SK-N-SH (cell line): ENCODE measurements at regions of chr10 and their contacts with region 1.

Region 1: GRCh38 chr10:63720072-63720537 is 198.9 kb downstream of the REEP3 start:
- DNase-seq: peak; percentile 27
- H3K4me3 ChIP-seq: peak overlapping the region in 1 of 2 experiments; percentile 53; a peak in 1 of 4 replicates
- H3K27ac ChIP-seq: peak overlapping the region in 1 of 2 experiments; percentile 56; a peak in 2 of 4 replicates
- H3K4me1 ChIP-seq: peaks cover 44 to 56% of the 10 kb centered on the region in 2 experiments
- H3K27me3 ChIP-seq: no peaks in the 10 kb centered on the region
- CTCF ChIP-seq: peak; percentile 99
- EP300 ChIP-seq: no peak
- RAD21 ChIP-seq: peak; percentile 95

Region 2: GRCh38 chr10:63157845-63158624 is 562.1 kb before region 1 on chr10:
- CTCF ChIA-PET with region 1: interaction called, 199 read pairs
- POLR2A ChIA-PET with region 1: no interaction called
- DNase-seq: peak; percentile 54
- H3K4me3 ChIP-seq: no peak overlapping the region
- H3K27ac ChIP-seq: no peak overlapping the region
- H3K4me1 ChIP-seq: no peaks in the 10 kb centered on the region
- H3K27me3 ChIP-seq: no peaks in the 10 kb centered on the region
- CTCF ChIP-seq: peak; percentile 88
- EP300 ChIP-seq: no peak
- RAD21 ChIP-seq: peak; percentile 91

Region 3: GRCh38 chr10:63173468-63174232 is 546.5 kb before region 1 on chr10:
- CTCF ChIA-PET with region 1: interaction called, 199 read pairs
- POLR2A ChIA-PET with region 1: no interaction called
- DNase-seq: no peak
- H3K4me3 ChIP-seq: no peak overlapping the region
- H3K27ac ChIP-seq: no peak overlapping the region
- H3K4me1 ChIP-seq: peaks cover 0 to 5% of the 10 kb centered on the region in 2 experiments; a peak in 2 of 4 replicates
- H3K27me3 ChIP-seq: no peaks in the 10 kb centered on the region
- CTCF ChIP-seq: no peak
- EP300 ChIP-seq: no peak
- RAD21 ChIP-seq: no peak

Region 4: GRCh38 chr10:63537536-63537935 is 182.6 kb before region 1 on chr10:
- CTCF ChIA-PET with region 1: interaction called, 10 read pairs
- POLR2A ChIA-PET with region 1: no interaction called
- DNase-seq: no peak
- H3K4me3 ChIP-seq: no peak overlapping the region
- H3K27ac ChIP-seq: peak overlapping the region in 1 of 2 experiments; percentile 3; a peak in 2 of 4 replicates
- H3K4me1 ChIP-seq: peaks cover 4 to 25% of the 10 kb centered on the region in 2 experiments; a peak in 3 of 4 replicates
- H3K27me3 ChIP-seq: no peaks in the 10 kb centered on the region
- CTCF ChIP-seq: no peak
- EP300 ChIP-seq: no peak
- RAD21 ChIP-seq: no peak

Region 5: DNA sequence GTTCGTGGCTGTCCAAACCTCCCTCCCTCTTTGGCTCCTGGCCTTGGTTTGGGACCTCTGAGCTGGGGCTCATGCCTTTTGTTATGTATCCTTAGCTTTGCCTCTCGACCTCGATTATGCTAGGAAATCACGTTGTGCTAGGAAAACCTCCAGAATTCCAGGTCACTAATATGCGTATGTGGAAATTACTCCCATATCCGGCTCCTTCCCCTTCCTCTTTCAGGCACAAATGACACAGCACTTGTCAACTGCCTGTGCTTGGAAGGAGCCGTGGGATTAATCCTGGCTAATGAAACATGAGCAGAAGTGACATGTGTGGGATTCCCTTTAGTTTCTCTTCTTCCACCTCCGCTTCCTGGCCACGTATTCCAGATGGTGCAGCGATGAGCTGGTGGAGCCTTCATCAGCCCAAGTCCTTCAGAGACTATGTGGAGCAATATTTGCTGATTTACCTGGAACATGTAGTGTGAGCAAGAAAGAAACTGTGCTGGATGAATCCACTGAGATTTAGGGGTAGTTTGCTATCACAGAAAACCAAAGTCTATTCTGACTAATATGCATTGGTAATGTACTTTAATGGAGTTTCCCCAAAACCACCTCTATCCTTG is 49.7 kb before region 1 on chr10:
- CTCF ChIA-PET with region 1: interaction called, 29 read pairs
- POLR2A ChIA-PET with region 1: no interaction called
- DNase-seq: no peak
- H3K4me3 ChIP-seq: no peak overlapping the region
- H3K27ac ChIP-seq: peak overlapping the region; percentile 75 to 94; a peak in 3 of 4 replicates
- H3K4me1 ChIP-seq: peaks cover 33 to 47% of the 10 kb centered on the region in 2 experiments
- H3K27me3 ChIP-seq: no peaks in the 10 kb centered on the region
- CTCF ChIP-seq: no peak
- EP300 ChIP-seq: no peak
- RAD21 ChIP-seq: no peak

Region 6: DNA sequence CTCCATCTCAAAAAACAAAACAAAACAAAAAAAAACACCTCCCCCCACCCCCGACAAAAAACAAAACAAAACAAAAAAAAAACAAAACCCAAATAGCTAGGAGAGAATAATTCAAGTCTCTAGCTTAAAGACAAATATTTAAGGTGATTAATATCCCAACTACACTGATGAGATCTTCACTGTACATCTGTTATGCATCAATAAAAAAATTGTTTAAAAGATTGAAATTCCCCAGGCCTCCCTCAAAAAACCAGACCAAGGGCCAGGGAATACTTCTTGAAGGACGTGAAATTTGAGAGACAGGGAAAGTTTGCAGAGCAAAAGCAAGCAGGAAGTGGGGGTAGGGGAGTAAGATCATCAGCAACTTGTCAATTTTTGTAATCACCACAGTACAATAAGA is 33.7 kb after region 1 on chr10:
- CTCF ChIA-PET with region 1: interaction called, 15 read pairs
- POLR2A ChIA-PET with region 1: no interaction called
- DNase-seq: no peak
- H3K4me3 ChIP-seq: no peak overlapping the region
- H3K27ac ChIP-seq: no peak overlapping the region
- H3K4me1 ChIP-seq: peaks cover 0 to 3% of the 10 kb centered on the region in 2 experiments; a peak in 2 of 4 replicates
- H3K27me3 ChIP-seq: no peaks in the 10 kb centered on the region
- CTCF ChIP-seq: no peak
- EP300 ChIP-seq: peak; percentile 50; a peak in 2 of 4 replicates
- RAD21 ChIP-seq: no peak

Region 7: DNA sequence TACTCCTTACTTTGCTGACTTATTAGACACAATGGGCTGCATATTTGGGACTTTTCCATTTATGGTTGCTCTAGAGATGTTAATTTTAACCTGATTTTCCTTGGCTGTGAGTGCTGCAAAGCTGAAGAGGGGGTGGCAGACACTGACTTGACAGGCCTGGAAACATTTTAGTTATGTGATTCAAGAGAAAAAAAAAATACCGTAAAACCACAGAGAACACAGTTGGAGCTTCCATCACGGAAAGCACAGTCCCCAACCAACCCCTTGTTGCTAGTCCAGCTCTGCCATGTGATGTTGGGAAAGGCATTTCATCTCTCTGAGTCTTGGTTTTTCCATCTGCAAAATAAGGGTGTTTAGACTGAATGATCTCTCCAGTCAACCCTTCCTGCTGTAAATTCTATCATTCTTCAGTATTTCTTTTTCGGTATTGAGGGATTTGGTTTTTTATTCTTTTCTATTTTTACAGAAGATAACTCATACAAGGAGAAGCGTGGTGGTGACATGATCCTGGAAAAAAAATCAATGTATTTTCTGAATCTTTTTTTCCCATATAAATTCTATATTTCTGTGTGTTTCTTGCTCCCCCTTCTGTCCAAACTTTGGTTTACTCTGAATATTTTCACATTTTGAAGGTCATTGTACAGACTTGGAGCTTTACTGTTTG is 47.2 kb after region 1 on chr10:
- CTCF ChIA-PET with region 1: interaction called, 52 read pairs
- POLR2A ChIA-PET with region 1: no interaction called
- DNase-seq: no peak
- H3K4me3 ChIP-seq: no peak overlapping the region
- H3K27ac ChIP-seq: no peak overlapping the region
- H3K4me1 ChIP-seq: peaks cover 2 to 8% of the 10 kb centered on the region in 2 experiments; a peak in 3 of 4 replicates
- H3K27me3 ChIP-seq: no peaks in the 10 kb centered on the region; the same call in 1 of the 2 replicates
- CTCF ChIP-seq: peak; percentile 74
- EP300 ChIP-seq: no peak
- RAD21 ChIP-seq: peak; percentile 79